Activated CD4-positive, alpha-beta memory T cell treated with anti-CD3 and anti-CD28 coated beads for 36 hours (primary cell): ENCODE measurements at regions of chr7 and their contacts with region 1.

Region 1: DNA sequence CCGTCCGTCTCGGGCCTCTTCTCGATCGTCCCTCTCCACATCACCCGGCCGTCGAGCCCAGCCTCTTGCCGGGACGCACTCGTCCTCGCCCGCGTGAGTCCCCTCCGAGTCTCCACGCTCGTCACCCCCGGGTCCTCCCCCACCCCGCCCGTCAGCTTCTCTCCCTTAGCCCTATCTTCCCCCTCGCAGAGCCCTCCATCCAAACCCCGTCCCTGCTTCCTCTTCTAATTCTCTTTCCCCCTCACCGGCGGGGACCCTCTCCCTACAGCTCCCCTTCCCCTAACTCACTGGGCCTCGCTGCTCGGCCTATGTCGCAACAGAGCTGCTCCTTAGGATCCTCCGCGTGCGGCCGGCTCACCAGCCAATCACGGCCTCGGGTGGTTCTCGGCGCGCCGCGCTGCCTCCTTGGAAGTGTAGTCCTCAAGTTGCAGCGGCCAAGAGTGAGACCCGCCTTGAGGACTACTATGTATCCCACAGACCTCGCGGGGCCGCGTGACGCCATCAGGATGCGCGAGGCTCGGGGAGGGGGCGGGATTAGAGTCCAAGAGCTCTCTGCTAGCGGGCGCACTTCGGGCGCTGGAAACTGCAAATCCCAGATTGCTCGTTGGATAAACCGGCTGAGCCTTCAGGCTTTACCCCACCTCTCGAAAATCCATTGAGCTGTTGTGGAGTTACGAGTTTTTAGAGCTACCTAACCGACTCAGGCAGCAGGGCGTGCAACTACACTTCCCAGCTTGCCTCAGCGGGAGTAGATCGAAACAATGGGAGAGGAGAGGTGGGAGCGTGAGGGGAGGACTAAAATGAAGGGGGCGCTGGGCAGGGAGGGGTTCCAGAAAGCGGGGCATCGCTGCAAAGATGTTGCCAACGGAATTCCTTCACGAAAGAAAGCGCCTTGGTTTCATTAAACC is at the start of gene ABCF2:
- DNase-seq: peak; percentile 99
- H3K4me3 Mint-ChIP-seq: peak within 1 kb of the TSS; percentile 99
- H3K27ac Mint-ChIP-seq: peak within 1 kb of the TSS; percentile 89
- H3K4me1 Mint-ChIP-seq: peaks cover 47% of the 10 kb centered on the region
- H3K27me3 Mint-ChIP-seq: no peaks in the 10 kb centered on the region
- total RNA-seq, gene ABCF2: 41.1 to 41.2 TPM

Region 2: DNA sequence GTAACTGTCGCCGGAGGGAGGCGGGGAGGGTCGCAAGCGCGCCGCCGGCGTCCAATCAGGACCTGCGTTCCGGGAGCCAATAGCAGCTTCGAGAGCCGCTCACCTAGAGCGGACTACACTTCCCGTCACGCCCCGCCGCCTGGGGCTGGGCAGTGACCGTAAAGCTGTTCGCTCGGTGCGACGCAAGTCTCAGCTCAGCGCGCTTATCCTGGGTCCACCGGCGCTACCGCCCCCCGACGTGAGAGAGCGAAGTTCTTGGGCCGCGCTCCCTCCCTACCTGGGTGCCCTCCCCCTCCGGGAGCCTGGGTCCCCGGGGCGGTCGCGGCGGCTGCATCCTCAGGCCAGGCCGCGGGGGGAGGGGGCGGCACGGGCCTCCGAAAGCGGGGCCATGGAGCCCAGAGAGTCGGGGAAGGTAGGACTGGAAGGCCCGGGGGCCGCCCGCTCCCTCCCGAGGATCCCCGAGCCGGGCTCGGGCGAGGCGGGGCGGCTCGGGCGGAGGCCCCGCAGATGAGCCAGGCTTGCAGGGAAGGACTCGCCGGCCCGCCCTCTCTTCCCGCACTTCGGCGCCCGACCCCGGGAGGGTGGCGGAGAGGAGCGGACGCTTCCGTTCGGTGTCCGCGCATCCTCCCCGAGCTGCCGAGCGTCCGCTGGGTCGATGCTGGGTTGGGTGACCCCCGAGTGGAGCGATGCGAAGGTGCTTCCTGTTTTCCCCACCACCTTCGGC is 1388.7 kb before region 1 on chr7 and contains the start of gene ZNF862:
- CTCF ChIA-PET with region 1: no interaction called
- POLR2A ChIA-PET with region 1: no interaction called
- intact Hi-C with region 1: loop called (anchors 10 kb)
- DNase-seq: peak; percentile 97
- H3K4me3 Mint-ChIP-seq: peak within 1 kb of the TSS; percentile 80
- H3K27ac Mint-ChIP-seq: peak within 1 kb of the TSS; percentile 65
- H3K4me1 Mint-ChIP-seq: peaks cover 28% of the 10 kb centered on the region
- H3K27me3 Mint-ChIP-seq: no peaks in the 10 kb centered on the region
- total RNA-seq, gene ZNF862: 18.1 to 21.4 TPM

Region 3: DNA sequence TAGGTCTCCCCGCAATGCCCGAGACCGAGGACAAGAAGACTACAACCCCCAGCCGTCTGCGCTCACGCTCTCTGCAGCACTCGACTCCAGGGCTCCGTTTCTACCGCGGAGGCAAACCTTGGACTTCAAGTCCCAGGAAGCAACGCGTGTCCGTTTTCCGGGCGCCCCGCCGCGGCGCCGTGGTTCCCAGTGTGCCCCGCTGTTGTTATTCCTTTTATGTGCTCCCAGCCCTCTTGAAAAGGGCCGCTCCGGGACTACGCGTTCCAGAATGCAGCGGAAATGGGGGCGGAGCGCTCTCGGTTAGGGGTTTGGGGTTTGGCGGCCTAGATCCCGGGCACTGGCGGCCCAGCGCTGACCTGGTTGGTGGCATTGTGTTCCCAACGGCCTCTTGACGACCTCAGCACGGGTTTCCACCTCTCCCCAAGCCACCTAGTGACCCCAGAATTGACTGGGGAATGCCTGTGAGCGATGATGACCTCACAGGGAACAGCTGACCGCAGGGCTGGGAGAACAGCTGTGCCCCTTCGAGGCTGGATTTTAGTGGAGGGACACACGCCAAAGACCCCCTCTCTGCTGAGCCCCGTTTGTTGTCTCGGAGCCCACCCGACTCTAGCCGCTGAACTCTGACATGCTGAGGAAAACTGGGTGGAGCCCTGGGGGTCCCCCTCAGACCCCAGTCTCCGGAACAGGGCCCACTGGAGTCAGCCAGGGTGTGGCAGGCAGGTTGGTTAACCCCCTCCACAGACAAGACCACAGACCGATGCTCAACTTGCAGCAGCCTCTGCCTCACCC is 168.9 kb before region 1 on chr7:
- CTCF ChIA-PET with region 1: no interaction called
- POLR2A ChIA-PET with region 1: interaction called, 3 read pairs
- intact Hi-C with region 1: loop called (anchors 1 kb)
- DNase-seq: peak; percentile 98
- H3K4me3 Mint-ChIP-seq: peak overlapping the region; percentile 89
- H3K27ac Mint-ChIP-seq: peak overlapping the region; percentile 89
- H3K4me1 Mint-ChIP-seq: peaks cover 25% of the 10 kb centered on the region
- H3K27me3 Mint-ChIP-seq: no peaks in the 10 kb centered on the region

Region 4: GRCh38 chr7:151088856-151089699 is 138.1 kb before region 1 on chr7:
- CTCF ChIA-PET with region 1: no interaction called
- POLR2A ChIA-PET with region 1: no interaction called
- intact Hi-C with region 1: no loop called
- DNase-seq: no peak
- H3K4me3 Mint-ChIP-seq: peak overlapping the region; percentile 12
- H3K27ac Mint-ChIP-seq: no peak overlapping the region
- H3K4me1 Mint-ChIP-seq: peaks cover 33% of the 10 kb centered on the region
- H3K27me3 Mint-ChIP-seq: peaks cover 5% of the 10 kb centered on the region

Region 5: GRCh38 chr7:151123822-151124464 is 103.2 kb before region 1 on chr7:
- CTCF ChIA-PET with region 1: interaction called, 10 read pairs
- POLR2A ChIA-PET with region 1: no interaction called
- intact Hi-C with region 1: loop called (anchors 5 kb)
- DNase-seq: peak; percentile 85
- H3K4me3 Mint-ChIP-seq: no peak overlapping the region
- H3K27ac Mint-ChIP-seq: no peak overlapping the region
- H3K4me1 Mint-ChIP-seq: no peaks in the 10 kb centered on the region
- H3K27me3 Mint-ChIP-seq: no peaks in the 10 kb centered on the region

Region 6: DNA sequence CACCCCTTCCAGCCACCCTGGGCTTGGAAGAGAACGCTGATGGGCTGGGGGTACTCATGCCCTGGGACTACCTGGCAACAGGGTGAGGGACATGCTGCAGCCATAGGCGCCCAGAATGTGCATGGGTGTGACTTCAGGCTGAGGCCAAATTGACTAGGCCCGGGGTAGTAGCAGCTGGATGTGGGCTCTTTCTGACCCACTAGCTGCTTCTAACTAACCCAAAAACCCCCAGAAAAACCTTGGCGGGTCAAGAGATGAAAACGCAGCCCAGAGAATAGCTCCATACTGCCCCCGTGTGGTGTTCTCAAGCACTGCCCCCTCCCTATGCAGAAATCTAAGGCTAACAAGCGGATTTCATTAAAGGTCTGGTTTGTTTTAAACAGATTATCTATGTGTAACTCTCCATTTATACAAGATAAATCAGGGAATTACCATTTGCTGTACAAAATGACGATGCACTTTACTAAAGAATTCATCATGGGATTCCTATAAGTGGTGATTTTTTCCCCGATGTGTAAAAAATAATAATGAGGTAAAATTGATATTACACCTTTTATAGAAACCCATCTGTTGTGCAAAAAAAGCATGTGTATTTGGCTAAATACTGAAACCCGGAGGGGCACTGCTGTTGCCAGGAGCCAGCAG is 17.2 kb after region 1 on chr7:
- CTCF ChIA-PET with region 1: interaction called, 62 read pairs
- POLR2A ChIA-PET with region 1: interaction called, 19 read pairs
- intact Hi-C with region 1: loop called (anchors 2 kb)
- DNase-seq: peak; percentile 78
- H3K4me3 Mint-ChIP-seq: peak overlapping the region; percentile 38
- H3K27ac Mint-ChIP-seq: no peak overlapping the region
- H3K4me1 Mint-ChIP-seq: peaks cover 37% of the 10 kb centered on the region
- H3K27me3 Mint-ChIP-seq: peaks cover 27% of the 10 kb centered on the region

Region 7: DNA sequence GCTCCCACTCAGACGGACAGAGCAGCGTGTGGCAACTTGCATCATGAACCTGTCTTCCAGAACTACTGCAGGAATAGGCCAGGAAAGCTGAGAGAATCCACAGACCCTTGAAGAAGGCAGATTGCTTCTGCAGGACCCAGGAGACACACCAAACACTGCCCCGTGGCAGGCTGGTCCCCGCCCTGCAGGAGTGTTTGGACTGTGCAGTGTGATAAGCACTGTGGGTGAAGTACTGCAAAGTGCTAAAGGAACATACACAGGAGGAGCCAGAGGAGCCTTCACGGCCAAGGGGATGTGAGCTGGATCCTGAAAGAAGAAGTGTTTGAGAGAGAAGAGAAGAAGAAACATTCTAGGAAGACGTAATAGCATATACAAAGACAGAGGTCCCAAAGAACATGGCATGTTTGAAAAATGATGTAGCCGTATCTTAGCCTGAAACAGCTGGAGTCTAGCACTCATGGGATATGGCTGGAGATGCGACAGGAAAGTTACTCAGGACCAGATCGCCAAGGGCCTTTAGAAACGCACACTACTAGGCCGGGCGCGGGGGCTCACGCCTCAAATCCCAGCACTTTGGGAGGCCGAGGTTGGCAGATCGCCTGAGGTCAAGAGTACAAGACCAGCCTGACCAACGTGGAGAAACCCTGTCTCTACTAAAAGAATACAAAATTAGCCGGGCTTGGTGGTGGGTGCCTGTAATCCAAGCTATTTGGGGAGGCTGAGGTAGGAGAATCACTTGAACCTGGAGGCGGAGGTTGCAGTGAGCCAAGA is 389.5 kb after region 1 on chr7:
- CTCF ChIA-PET with region 1: no interaction called
- POLR2A ChIA-PET with region 1: no interaction called
- intact Hi-C with region 1: no loop called
- DNase-seq: no peak
- H3K4me3 Mint-ChIP-seq: no peak overlapping the region
- H3K27ac Mint-ChIP-seq: no peak overlapping the region
- H3K4me1 Mint-ChIP-seq: no peaks in the 10 kb centered on the region
- H3K27me3 Mint-ChIP-seq: no peaks in the 10 kb centered on the region